Dorsolateral prefrontal cortex (tissue), 120 donors: ENCODE measurements at regions of chr10 and their contacts with region 1.

Region 1: GRCh38 chr10:7260412-7260900 is 150.4 kb downstream of the SFMBT2 start:
- DNase-seq: peak in 5 of 10 donors; percentile 38 to 63 (median 45)
- H3K4me3 ChIP-seq: peak overlapping the region in 4 of 59 donors; percentile 9 to 22 (median 14)
- H3K27ac ChIP-seq: peak overlapping the region in 24 of 59 donors; percentile 5 to 65 (median 28)
- H3K27me3 ChIP-seq: no peaks in the 10 kb centered on the region
- CTCF ChIP-seq: peak; percentile 49 to 88 (median 79)

Region 2: GRCh38 chr10:6431861-6432260 is 828.6 kb before region 1 on chr10:
- intact Hi-C with region 1: no loop called
- DNase-seq: no peak
- H3K4me3 ChIP-seq: no peak overlapping the region
- H3K27ac ChIP-seq: no peak overlapping the region
- H3K27me3 ChIP-seq: no peaks in the 10 kb centered on the region
- CTCF ChIP-seq: no peak

Region 3: DNA sequence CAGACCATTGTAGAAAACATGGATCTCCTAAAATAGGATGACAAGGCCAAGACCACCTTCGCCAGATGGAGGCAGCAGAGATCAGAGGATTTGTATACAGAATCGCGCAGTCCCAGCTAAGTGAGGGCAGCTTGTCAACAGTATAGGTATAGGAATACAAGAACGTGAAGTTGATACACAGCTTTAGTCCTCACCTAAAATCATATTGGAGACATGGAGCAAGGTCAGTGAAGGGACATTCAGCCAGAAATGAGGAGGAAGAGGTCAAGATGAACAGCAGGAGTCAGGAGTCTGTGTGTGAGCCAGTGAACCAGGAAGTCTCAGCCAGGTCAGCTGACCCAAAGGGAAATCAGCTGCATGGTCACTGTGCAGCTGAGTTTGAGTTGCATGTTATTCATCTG is 417.0 kb before region 1 on chr10:
- intact Hi-C with region 1: loop called in 1 of 2 experiments (anchors 10 kb)
- DNase-seq: peak in 8 of 10 donors; percentile 35 to 80 (median 58)
- H3K4me3 ChIP-seq: peak overlapping the region in 8 of 59 donors; percentile 7 to 41 (median 24)
- H3K27ac ChIP-seq: peak overlapping the region in 35 of 59 donors; percentile 2 to 82 (median 50)
- H3K27me3 ChIP-seq: no peaks in the 10 kb centered on the region
- CTCF ChIP-seq: peak in 53 of 56 donors; percentile 16 to 77 (median 49)

Region 4: GRCh38 chr10:7121154-7121810 is 139.2 kb before region 1 on chr10:
- intact Hi-C with region 1: loop called in 1 of 2 experiments (anchors 10 kb)
- DNase-seq: peak in 7 of 10 donors; percentile 32 to 67 (median 56)
- H3K4me3 ChIP-seq: no peak overlapping the region
- H3K27ac ChIP-seq: no peak overlapping the region
- H3K27me3 ChIP-seq: peaks cover 0 to 6% (median 0%) of the 10 kb centered on the region in 45 donors
- CTCF ChIP-seq: peak; percentile 39 to 85 (median 68)

Region 5: DNA sequence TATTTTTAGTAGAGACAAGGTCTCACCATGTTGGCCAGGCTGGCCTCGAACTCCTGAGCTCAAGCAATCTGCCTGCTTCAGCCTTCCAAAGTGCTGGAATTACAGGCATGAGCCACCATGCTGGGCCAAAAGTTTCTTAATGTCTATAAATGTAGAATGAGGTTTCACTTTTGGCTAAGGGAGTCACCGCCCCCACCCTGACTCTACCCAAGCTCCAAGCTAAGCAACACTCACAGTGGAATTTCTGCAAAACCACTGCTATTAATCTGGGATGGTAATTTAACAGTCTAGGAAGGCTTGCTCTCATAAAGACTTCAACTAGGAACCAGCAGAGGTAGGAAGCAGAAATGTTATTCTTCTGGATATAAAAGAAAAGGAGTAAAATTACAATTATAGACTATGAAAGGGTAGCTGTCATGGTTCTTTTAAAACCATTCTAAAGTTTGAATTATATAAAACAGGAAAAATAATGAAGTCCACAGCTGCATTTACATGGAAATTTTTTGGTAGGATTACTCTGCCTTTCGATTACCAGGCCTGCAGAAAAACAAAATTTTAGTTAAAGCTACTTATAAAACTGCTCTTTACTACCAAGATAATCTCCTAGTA is 61.2 kb before region 1 on chr10:
- intact Hi-C with region 1: no loop called
- DNase-seq: no peak
- H3K4me3 ChIP-seq: no peak overlapping the region
- H3K27ac ChIP-seq: no peak overlapping the region
- H3K27me3 ChIP-seq: no peaks in the 10 kb centered on the region
- CTCF ChIP-seq: no peak

Region 6: GRCh38 chr10:7337431-7338171 is 77.1 kb after region 1 on chr10:
- intact Hi-C with region 1: loop called in 1 of 2 experiments (anchors 5 kb)
- DNase-seq: no peak
- H3K4me3 ChIP-seq: peak overlapping the region in 1 of 59 donors; percentile 3
- H3K27ac ChIP-seq: peak overlapping the region in 42 of 59 donors; percentile 4 to 84 (median 48)
- H3K27me3 ChIP-seq: no peaks in the 10 kb centered on the region
- CTCF ChIP-seq: no peak

Region 7: DNA sequence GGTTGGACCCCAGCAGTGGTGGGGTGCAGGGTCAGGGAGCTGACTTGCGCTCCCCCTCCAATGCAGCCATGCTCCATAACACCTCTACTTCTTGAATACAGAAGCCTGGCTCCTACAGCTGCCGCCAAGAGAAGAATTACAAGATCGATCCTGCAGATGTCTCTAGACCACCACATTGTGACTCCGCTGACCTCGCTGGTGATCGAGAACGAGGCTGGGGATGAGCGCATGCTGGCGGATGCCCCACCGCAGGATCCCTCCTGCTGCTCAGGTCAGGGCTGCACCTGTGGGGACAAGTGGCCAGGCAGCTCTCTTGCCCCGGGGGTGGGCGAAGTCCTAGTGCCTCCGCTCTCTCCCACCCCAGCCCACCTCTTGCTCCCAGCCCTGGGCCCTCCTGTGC is 474.4 kb after region 1 on chr10:
- intact Hi-C with region 1: no loop called
- DNase-seq: no peak
- H3K4me3 ChIP-seq: no peak overlapping the region
- H3K27ac ChIP-seq: no peak overlapping the region
- H3K27me3 ChIP-seq: peaks cover 0 to 8% (median 0%) of the 10 kb centered on the region in 45 donors
- CTCF ChIP-seq: no peak